ENCODE measurements at regions of chr17 and their contacts with region 1.

Region 1: GRCh38 chr17:1628856-1629646 is 417 bp upstream of the SLC43A2 start:
- DNase-seq: peak; percentile 74 to 91
- H3K4me3 ChIP-seq: peak overlapping the region; percentile 74
- H3K27ac ChIP-seq: no peak overlapping the region
- H3K4me1 ChIP-seq: peaks cover 8% of the 10 kb centered on the region; the same call in 1 of the 2 replicates
- H3K27me3 ChIP-seq: no peaks in the 10 kb centered on the region
- CTCF ChIP-seq: no peak

Region 2: DNA sequence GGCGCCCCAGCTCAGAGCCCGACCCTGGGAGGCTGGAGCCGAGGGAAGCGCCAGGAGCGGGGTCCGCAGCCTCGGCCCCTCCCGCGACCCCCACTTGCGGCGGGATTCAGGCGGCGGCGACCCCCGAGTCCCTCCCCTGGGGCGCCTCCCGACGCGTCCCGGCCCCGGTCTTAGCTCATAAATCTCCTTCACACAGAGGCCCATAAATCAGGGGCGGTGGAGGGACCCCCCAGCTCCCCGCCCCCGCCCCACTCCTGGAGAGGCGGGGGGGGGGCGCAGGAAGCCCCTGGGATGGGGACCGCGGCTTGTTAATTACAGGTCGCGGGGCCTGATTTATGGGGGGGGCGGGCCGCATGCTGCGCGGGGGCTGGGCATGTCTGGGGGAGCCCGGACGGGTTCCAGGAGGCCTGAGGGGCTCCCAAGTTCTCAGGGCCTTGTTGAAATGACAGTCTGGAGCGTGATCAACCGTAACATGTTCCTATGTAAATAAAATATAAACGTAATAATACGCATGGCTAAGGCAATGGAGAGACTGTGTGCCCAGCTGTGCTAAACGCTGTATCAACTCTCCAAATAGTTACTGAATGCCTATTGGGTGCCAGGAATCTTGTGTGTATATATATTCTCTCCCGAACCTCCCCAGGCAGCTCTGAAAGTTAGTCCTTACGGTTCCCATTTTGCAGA is 368.8 kb before region 1 on chr17:
- CTCF ChIA-PET with region 1: no interaction called
- POLR2A ChIA-PET with region 1: no interaction called
- intact Hi-C with region 1: loop called (anchors 1 kb)
- DNase-seq: no peak
- H3K4me3 ChIP-seq: peak overlapping the region; percentile 58; the same call in 1 of the 2 replicates
- H3K27ac ChIP-seq: no peak overlapping the region
- H3K4me1 ChIP-seq: peaks cover 10% of the 10 kb centered on the region; the same call in 1 of the 2 replicates
- H3K27me3 ChIP-seq: peaks cover 5% of the 10 kb centered on the region; the same call in 1 of the 2 replicates
- CTCF ChIP-seq: no peak

Region 3: GRCh38 chr17:1275962-1276736 is 352.9 kb before region 1 on chr17:
- CTCF ChIA-PET with region 1: no interaction called
- POLR2A ChIA-PET with region 1: no interaction called
- intact Hi-C with region 1: loop called (anchors 5 kb)
- DNase-seq: peak in 1 of 2 experiments; percentile 67
- H3K4me3 ChIP-seq: no peak overlapping the region
- H3K27ac ChIP-seq: no peak overlapping the region
- H3K4me1 ChIP-seq: no peaks in the 10 kb centered on the region
- H3K27me3 ChIP-seq: peaks cover 32% of the 10 kb centered on the region
- CTCF ChIP-seq: peak; percentile 93

Region 4: DNA sequence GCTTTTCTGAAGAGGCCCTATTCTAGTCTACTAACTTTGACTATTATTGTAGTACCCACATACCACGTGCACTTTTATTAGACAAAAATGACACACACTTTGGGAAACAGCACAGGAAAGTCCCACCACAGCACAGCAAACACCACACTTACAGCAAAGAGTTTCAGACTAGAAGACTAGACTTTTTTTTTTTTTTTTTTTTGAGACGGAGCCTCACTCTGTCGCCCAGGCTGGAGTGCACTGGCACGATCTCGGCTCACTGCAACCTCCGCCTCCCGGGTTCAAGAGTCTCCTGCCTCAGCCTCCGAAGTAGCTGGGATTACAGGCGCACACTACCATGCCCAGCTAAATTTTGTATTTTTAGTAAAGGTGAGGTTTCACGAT is 249.1 kb before region 1 on chr17:
- CTCF ChIA-PET with region 1: interaction called, 13 read pairs
- POLR2A ChIA-PET with region 1: no interaction called
- intact Hi-C with region 1: no loop called
- DNase-seq: no peak
- H3K4me3 ChIP-seq: no peak overlapping the region
- H3K27ac ChIP-seq: no peak overlapping the region
- H3K4me1 ChIP-seq: 0 out of 2 replicates have a peak, but pooled peaks cover 6% of the 10 kb centered on the region
- H3K27me3 ChIP-seq: no peaks in the 10 kb centered on the region
- CTCF ChIP-seq: no peak

Region 5: GRCh38 chr17:1516388-1517161 is 112.5 kb before region 1 on chr17 and contains the start of gene INPP5K:
- CTCF ChIA-PET with region 1: no interaction called
- POLR2A ChIA-PET with region 1: no interaction called
- intact Hi-C with region 1: loop called (anchors 1 kb)
- DNase-seq: peak; percentile 92 to 99
- H3K4me3 ChIP-seq: peak within 1 kb of the TSS; percentile 72
- H3K27ac ChIP-seq: peak within 1 kb of the TSS; percentile 63
- H3K4me1 ChIP-seq: peaks cover 13% of the 10 kb centered on the region
- H3K27me3 ChIP-seq: no peaks in the 10 kb centered on the region
- CTCF ChIP-seq: no peak
- total RNA-seq, gene INPP5K: 41.9 and 42.9 TPM in 2 replicates

Region 6: GRCh38 chr17:1573916-1574696 is 54.9 kb before region 1 on chr17:
- CTCF ChIA-PET with region 1: interaction called, 13 read pairs
- POLR2A ChIA-PET with region 1: no interaction called
- intact Hi-C with region 1: loop called (anchors 1 kb)
- DNase-seq: peak; percentile 45 to 91
- H3K4me3 ChIP-seq: no peak overlapping the region
- H3K27ac ChIP-seq: no peak overlapping the region
- H3K4me1 ChIP-seq: peaks cover 13% of the 10 kb centered on the region
- H3K27me3 ChIP-seq: no peaks in the 10 kb centered on the region
- CTCF ChIP-seq: peak; percentile 97

Region 7: GRCh38 chr17:1580979-1581678 is 47.9 kb before region 1 on chr17:
- CTCF ChIA-PET with region 1: no interaction called
- POLR2A ChIA-PET with region 1: interaction called, 14 read pairs
- intact Hi-C with region 1: no loop called
- DNase-seq: no peak
- H3K4me3 ChIP-seq: no peak overlapping the region
- H3K27ac ChIP-seq: no peak overlapping the region
- H3K4me1 ChIP-seq: peaks cover 13% of the 10 kb centered on the region
- H3K27me3 ChIP-seq: no peaks in the 10 kb centered on the region
- CTCF ChIP-seq: no peak

Region 8: DNA sequence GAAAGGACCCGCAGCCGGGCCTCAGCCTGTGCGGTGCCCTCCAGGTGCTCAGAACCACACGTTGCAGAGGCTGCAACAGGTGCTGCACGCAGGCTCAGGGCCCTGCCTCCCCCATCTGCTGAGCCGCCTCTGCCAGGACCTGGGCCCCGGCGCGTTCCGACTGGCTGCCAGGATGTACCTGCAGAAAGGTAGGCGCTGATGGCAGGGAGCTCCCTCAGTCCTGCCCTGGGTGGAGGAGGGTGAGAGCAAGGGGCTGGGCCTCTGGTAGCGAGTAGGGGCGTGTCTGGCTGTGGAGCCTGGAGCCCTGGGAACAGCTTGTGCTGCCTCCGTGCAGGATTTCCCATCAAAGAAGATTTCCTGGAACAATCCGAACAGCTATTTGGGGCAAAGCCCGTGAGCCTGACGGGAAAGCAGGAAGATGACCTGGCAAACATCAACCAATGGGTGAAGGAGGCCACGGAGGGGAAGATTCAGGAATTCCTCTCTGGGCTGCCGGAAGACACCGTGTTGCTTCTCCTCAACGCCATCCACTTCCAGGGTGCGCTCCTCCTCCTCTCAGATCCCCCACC is 118.0 kb after region 1 on chr17:
- CTCF ChIA-PET with region 1: no interaction called
- POLR2A ChIA-PET with region 1: no interaction called
- intact Hi-C with region 1: no loop called
- DNase-seq: no peak
- H3K4me3 ChIP-seq: no peak overlapping the region
- H3K27ac ChIP-seq: no peak overlapping the region
- H3K4me1 ChIP-seq: peaks cover 11% of the 10 kb centered on the region; the same call in 1 of the 2 replicates
- H3K27me3 ChIP-seq: no peaks in the 10 kb centered on the region; the same call in 1 of the 2 replicates
- CTCF ChIP-seq: no peak

Region 9: DNA sequence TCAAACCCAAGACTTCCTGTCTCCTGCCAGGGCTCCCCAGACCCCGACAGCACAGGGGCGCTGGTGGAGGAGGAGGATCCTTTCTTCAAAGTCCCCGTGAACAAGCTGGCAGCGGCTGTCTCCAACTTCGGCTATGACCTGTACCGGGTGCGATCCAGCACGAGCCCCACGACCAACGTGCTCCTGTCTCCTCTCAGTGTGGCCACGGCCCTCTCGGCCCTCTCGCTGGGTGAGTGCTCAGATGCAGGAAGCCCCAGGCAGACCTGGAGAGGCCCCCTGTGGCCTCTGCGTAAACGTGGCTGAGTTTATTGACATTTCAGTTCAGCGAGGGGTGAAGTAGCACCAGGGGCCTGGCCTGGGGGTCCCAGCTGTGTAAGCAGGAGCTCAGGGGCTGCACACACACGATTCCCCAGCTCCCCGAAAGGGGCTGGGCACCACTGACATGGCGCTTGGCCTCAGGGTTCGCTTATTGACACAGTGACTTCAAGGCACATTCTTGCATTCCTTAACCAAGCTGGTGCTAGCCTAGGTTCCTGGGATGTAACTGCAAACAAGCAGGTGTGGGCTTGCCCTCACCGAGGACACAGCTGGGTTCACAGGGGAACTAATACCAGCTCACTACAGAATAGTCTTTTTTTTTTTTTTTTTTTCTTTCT is 140.9 kb after region 1 on chr17:
- CTCF ChIA-PET with region 1: no interaction called
- POLR2A ChIA-PET with region 1: no interaction called
- intact Hi-C with region 1: no loop called
- DNase-seq: peak; percentile 62 to 76
- H3K4me3 ChIP-seq: no peak overlapping the region
- H3K27ac ChIP-seq: no peak overlapping the region
- H3K4me1 ChIP-seq: peaks cover 6% of the 10 kb centered on the region; the same call in 1 of the 2 replicates
- H3K27me3 ChIP-seq: no peaks in the 10 kb centered on the region
- CTCF ChIP-seq: no peak

Region 10: DNA sequence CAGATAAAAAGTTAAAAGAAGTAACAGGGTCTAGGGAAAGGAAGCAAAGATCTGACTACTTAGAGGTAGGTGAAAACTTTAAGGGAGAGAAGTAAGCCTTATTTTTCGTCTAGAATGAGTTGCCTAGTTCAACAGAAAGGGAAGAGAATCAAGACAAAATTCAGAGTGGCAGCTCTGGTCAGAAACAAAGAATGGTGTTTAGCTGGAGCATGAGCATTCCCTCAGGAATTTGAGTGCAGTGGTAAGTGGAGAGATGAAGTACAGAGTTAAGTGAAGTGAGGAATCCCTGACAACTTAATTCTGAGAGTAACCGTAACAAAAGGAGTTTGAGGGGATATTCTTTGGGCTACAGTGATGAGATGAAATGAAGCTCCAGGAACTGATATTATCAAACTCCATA is 663.0 kb after region 1 on chr17:
- CTCF ChIA-PET with region 1: no interaction called
- POLR2A ChIA-PET with region 1: no interaction called
- intact Hi-C with region 1: no loop called
- DNase-seq: no peak
- H3K4me3 ChIP-seq: no peak overlapping the region
- H3K27ac ChIP-seq: no peak overlapping the region
- H3K4me1 ChIP-seq: peaks cover 13% of the 10 kb centered on the region
- H3K27me3 ChIP-seq: no peaks in the 10 kb centered on the region
- CTCF ChIP-seq: no peak

Region 11: DNA sequence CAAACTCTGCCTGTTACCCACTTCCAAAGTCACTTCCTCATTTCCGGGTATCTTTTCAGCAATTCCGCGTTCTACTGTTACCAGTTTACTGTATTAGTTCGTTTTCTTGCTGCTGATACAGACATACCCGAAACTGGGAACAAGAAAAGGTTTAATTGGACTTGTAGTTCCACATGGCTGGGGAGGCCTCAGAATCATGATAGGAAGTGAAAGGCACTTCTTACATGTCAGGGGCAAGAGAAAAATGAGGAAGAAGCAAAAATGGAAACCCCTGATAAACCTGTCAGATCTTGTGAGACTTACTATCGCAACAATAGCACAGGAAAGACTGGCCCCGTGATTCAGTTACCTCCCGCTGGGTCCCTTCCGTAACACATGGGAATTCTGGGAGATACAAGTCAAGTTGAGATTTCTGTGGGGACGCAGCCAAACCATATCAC is 995.3 kb after region 1 on chr17:
- CTCF ChIA-PET with region 1: no interaction called
- POLR2A ChIA-PET with region 1: no interaction called
- intact Hi-C with region 1: no loop called
- DNase-seq: no peak
- H3K4me3 ChIP-seq: no peak overlapping the region
- H3K27ac ChIP-seq: no peak overlapping the region
- H3K4me1 ChIP-seq: no peaks in the 10 kb centered on the region
- H3K27me3 ChIP-seq: no peaks in the 10 kb centered on the region
- CTCF ChIP-seq: no peak

Measured in PC-9 (cell line).